ENCODE measurements at regions of chr13 and their contacts with region 1.

Region 1: DNA sequence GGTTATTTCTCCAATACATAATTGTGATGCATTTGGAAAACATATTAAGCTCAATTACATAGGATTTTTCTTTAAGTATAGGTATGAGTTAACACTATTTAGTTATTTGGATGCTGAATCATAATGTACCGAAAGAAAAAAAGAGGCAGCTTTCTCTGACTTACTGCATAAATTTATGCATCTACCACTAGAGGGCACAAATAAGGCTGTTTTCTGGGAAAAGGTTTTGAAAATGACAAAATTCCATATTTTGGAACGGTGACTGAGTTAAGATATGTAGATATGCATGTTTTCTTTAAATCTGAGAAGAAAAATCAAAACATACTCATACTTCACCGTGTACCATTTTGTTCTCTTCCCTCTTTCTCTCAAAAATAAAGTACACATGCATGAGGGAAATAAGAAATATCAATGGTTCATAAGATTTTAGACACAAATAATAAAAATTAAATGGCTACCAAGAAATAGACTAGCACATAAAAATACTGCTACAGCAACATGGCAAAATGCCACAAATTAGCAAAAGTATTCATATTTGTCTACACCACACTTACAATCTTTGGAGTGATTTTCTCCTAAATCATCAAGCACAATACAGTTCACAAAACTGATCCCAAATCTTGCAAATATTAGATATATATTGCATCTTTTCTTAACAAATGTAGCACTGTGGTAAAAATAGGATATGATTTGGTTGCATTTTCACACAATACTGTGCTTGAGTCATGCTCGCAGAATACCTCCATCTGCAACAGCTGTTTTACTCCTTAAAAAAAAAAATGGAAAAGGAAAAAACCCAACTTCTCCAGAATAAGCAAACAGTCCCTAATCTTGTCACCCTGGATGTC is 260.0 kb downstream of the FGF14 start:
- DNase-seq: no peak
- H3K4me3 ChIP-seq: no peak overlapping the region
- H3K27ac ChIP-seq: no peak overlapping the region
- H3K27me3 ChIP-seq: no peaks in the 10 kb centered on the region
- CTCF ChIP-seq: peak; percentile 77

Region 2: DNA sequence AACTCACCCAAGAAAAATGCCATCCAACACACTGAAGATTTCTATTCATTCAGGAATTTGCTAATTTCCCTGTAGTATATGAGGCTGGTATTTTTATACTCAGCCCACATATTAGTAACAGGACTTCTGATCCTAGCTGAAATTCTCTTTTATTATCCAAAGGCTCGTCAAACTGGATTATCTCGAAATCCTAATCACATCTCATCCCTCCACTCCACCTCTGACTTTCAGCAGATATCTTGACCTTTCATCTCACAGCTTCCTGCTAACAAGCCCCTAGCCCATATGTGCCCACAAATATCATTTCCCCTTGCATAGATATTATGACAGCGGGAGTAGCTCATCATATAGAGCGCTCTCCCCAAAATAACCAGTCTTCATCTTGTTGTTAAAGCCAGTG is 19.7 kb before region 1 on chr13:
- CTCF ChIA-PET with region 1: interaction called, 16 read pairs
- POLR2A ChIA-PET with region 1: no interaction called
- DNase-seq: no peak
- H3K4me3 ChIP-seq: no peak overlapping the region
- H3K27ac ChIP-seq: no peak overlapping the region
- H3K27me3 ChIP-seq: no peaks in the 10 kb centered on the region
- CTCF ChIP-seq: no peak

Region 3: DNA sequence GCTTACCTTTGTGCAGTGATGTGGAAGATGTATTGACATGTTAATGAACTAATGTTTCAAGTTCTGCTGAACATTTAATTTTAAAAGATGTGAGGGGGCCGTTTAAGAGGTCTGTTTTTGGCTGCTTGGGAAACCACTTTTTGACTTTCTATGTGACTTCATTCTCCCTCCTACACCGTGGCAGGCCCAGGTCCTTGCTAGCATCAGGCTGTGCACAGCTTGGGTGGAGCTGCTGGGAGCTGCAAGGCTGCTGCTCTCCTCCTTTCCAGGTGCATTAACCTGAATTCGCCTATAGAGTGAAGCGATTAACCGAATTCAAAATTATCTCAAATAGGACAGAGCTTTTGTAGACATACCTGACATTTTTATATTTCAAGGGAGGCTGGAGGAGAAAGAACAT is 10.9 kb after region 1 on chr13:
- CTCF ChIA-PET with region 1: interaction called, 17 read pairs
- POLR2A ChIA-PET with region 1: no interaction called
- DNase-seq: no peak
- H3K4me3 ChIP-seq: no peak overlapping the region
- H3K27ac ChIP-seq: no peak overlapping the region
- H3K27me3 ChIP-seq: no peaks in the 10 kb centered on the region
- CTCF ChIP-seq: no peak

Region 4: DNA sequence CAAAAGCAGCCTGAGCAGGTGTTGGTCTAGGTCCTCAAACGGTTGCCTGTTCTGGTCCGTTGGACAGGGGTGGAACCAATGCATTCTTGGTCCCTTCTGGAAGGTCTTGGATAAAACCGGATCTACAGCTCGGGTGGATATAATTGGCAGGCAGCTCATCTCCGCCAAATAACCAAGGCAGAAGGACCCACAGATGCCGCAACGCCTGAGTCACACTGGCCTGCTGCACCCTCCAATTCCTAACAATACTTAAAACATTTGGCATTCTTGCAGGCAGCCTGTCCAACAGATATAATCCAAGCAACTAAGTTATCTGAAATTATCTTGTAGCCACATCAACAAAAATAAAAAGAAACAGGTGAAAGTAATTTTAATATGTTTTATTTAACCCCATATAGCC is 319.0 kb after region 1 on chr13:
- CTCF ChIA-PET with region 1: interaction called, 19 read pairs
- POLR2A ChIA-PET with region 1: no interaction called
- DNase-seq: no peak
- H3K4me3 ChIP-seq: no peak overlapping the region
- H3K27ac ChIP-seq: no peak overlapping the region
- H3K27me3 ChIP-seq: no peaks in the 10 kb centered on the region
- CTCF ChIP-seq: no peak

Region 5: DNA sequence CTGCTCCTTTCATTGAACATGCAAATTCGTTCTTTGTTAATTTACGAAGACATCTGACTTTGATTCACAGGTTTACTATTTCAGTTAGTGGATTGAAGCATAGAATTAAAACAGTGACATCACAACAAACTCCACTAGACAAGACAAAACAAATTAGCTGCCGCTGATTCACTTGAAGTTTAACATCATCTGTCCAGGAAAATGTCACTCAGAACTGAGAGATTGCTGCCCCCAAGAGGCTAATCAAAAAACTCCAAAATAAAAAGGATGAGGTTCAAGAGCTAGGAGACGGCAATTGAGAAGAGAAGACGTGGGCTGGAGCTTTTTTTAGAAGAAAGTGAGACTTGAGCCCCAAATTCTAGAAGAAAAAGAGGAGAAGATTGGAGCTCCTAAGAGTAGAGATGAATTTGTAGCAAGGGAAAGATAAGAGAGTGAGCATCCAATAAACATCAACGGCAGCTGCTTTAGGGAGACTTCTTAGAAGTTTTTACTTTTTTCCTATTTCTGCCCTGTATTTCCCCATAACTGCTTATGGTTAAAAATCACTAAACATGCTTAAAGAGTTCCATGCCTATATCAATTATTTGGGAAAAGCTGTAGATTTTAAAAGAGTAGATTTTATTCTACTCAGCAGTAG is 414.2 kb after region 1 on chr13:
- CTCF ChIA-PET with region 1: interaction called, 41 read pairs
- POLR2A ChIA-PET with region 1: no interaction called
- DNase-seq: no peak
- H3K4me3 ChIP-seq: no peak overlapping the region
- H3K27ac ChIP-seq: no peak overlapping the region
- H3K27me3 ChIP-seq: no peaks in the 10 kb centered on the region
- CTCF ChIP-seq: peak; percentile 51

Measured in AG04450 (cell line).